ENCODE measurements at regions of chr2 and their contacts with region 1.

Region 1: DNA sequence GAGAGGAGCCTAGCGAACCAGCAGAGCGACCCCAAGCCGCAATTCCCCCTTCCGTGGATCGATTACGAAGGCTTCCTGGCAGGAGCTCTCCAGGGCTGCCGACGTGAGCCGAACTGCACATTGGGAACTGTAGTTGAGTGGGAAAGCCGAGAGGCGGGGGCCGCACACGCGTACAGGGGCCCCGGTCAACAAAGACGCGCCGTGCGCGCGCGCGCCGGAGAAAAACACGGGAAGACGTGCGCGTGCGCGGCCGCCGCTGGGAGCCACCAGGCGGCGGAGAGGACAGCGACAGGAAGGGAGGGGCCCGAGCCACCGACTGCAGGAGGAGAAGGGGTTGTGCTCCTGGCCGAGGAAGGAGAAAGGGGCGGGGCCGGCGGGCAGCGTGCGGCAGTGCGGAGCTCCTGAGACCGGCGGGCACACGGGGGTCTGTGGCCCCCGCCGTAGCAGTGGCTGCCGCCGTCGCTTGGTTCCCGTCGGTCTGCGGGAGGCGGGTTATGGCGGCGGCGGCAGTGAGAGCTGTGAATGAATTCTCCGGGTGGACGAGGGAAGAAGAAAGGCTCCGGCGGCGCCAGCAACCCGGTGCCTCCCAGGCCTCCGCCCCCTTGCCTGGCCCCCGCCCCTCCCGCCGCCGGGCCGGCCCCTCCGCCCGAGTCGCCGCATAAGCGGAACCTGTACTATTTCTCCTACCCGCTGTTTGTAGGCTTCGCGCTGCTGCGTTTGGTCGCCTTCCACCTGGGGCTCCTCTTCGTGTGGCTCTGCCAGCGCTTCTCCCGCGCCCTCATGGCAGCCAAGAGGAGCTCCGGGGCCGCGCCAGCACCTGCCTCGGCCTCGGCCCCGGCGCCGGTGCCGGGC is at the start of gene SPAST:
- DNase-seq: peak; percentile 98
- ATAC-seq: peak; percentile 97
- H3K4me3 Mint-ChIP-seq: peak within 1 kb of the TSS; percentile 90
- H3K27ac Mint-ChIP-seq: peak within 1 kb of the TSS; percentile 88
- H3K4me1 Mint-ChIP-seq: peaks cover 23% of the 10 kb centered on the region
- H3K27me3 Mint-ChIP-seq: no peaks in the 10 kb centered on the region
- total RNA-seq, gene SPAST: 17.3 to 20.4 TPM

Region 2: DNA sequence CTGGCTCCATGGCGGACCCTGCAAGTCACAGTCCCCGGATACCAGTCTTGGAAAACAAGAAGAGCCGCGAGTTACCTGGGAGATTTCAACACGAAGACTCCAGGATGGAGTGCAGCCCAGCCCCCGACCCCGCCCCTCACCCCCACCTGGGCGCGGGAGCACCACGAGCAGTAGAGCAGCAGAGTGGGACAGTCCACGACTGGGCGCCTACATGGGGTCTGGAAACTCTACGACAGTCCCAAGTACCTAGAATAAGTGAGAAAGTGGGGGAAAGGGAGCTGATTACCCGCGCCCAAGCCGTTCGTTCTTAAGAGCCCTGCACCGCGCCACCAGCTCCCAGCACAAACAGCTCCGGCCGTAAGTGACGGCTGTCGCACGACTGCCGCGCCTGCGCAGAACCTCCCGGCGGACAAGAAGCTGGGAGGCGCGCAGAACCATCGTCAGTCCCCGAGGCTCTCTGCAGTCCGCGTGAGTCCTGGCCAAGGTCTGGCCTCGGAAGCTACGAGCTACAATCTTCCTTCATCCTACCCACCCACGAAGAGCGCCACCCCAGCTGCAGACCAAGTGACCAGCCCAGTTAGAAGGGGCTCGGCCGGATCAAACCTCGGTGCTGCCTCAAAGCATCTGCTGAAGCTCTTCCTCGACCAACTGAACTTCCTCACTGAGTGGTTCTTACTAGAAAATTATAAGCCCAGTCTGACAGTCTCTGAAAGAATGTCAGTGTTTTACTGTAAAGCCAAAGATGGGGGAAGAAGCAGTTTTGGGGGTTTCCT is 23.9 kb before region 1 on chr2 and contains the start of gene DPY30:
- CTCF ChIA-PET with region 1: interaction called, 21 read pairs
- DNase-seq: peak; percentile 95
- ATAC-seq: peak; percentile 98
- H3K4me3 Mint-ChIP-seq: peak within 1 kb of the TSS; percentile 97
- H3K27ac Mint-ChIP-seq: peak within 1 kb of the TSS; percentile 91
- H3K4me1 Mint-ChIP-seq: peaks cover 19% of the 10 kb centered on the region
- H3K27me3 Mint-ChIP-seq: no peaks in the 10 kb centered on the region
- total RNA-seq, gene DPY30: 69.9 to 77.8 TPM

Measured in activated CD8-positive, alpha-beta memory T cell treated with anti-CD3 and anti-CD28 coated beads, Interleukin-2, amount 10 ng/mL, durations not matched to agents 7 days and 5 days (primary cell).